Psoas muscle (tissue), 8 donors: ENCODE measurements at regions of chr17 and their contacts with region 1.

Region 1: DNA sequence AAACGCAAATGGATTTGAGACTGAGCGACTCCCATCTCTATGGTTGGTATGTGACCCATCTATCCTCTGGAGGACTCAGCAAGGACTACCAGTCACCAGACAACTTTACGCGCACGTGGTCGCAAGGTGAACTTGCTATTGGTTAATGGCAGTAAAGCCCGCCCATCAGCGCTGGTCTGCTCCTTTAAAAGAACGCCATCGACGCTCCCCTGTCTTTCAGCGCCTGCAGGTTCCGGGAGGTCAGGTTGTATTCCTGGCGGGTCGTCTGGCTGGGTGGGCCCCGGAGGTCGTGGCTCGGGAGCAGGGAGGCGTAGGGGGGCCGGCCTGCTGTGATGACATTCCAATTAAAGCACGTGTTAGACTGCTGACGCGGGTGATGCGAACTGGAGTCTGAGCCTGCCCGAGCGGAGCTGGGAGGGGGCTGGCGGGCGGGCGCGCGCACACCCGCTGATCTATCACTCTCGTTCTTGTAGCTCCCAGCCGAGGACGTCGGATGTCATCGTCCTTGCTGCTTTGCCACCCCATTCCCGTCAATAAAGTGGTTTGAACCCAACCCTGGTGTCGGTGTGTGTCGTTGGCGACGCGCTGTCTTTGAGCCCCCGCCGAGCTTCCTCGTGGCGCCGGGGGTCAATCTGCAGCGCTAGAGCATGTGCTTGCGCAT is 15.9 kb upstream of the ERN1 start:
- DNase-seq: peak; percentile 96 to 98
- ATAC-seq: peak; percentile 86 to 92 (median 88)
- H3K4me3 ChIP-seq: peak overlapping the region; percentile 83
- H3K27ac ChIP-seq: peak overlapping the region; percentile 95
- H3K4me1 ChIP-seq: peaks cover 42% of the 10 kb centered on the region
- H3K27me3 ChIP-seq: no peaks in the 10 kb centered on the region
- CTCF ChIP-seq: no peak

Region 2: GRCh38 chr17:64174686-64175456 is 29.0 kb after region 1 on chr17:
- intact Hi-C with region 1: loop called in 1 of 2 experiments (anchors 1 kb)
- DNase-seq: peak in 1 of 2 donors; percentile 31
- ATAC-seq: peak; percentile 46 to 68 (median 62)
- H3K4me3 ChIP-seq: no peak overlapping the region
- H3K27ac ChIP-seq: peak overlapping the region; percentile 86
- H3K4me1 ChIP-seq: peaks cover 71% of the 10 kb centered on the region
- H3K27me3 ChIP-seq: no peaks in the 10 kb centered on the region
- CTCF ChIP-seq: no peak

Region 3: DNA sequence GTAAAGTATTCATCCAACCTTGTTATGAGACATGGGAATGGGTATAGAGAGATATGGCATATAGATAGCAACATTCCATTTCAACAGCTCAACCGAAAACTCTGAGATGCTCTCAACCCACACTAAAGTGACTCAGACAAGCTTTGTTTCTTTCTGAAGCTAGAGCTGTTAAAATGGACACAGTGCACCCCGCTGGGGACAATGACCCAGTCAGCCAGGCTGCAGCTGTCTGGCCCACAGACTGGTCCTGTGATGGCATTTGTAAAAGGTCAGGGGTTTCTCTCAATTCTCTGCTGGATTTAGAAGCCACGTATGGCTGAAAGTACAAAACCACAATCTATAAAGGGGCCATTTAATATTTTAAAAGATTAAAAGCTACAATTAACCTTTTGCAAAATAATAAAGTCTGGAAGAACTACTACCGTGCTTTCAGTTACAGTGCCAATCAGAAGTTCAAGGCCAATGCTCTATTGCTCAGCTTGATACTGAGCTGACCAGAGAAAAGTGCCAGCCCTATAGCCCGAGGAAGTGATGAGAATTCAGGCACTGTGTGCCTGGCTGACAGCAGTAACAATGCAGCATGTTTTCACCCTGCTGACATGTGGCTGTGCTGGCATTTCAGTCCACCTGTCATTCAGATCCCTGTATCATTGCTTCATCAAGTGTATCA is 56.9 kb after region 1 on chr17:
- intact Hi-C with region 1: loop called in 1 of 2 experiments (anchors 5 kb)
- DNase-seq: no peak
- ATAC-seq: peak; percentile 86 to 88 (median 86)
- H3K4me3 ChIP-seq: no peak overlapping the region
- H3K27ac ChIP-seq: peak overlapping the region; percentile 82
- H3K4me1 ChIP-seq: peaks cover 78% of the 10 kb centered on the region
- H3K27me3 ChIP-seq: no peaks in the 10 kb centered on the region
- CTCF ChIP-seq: no peak

Region 4: DNA sequence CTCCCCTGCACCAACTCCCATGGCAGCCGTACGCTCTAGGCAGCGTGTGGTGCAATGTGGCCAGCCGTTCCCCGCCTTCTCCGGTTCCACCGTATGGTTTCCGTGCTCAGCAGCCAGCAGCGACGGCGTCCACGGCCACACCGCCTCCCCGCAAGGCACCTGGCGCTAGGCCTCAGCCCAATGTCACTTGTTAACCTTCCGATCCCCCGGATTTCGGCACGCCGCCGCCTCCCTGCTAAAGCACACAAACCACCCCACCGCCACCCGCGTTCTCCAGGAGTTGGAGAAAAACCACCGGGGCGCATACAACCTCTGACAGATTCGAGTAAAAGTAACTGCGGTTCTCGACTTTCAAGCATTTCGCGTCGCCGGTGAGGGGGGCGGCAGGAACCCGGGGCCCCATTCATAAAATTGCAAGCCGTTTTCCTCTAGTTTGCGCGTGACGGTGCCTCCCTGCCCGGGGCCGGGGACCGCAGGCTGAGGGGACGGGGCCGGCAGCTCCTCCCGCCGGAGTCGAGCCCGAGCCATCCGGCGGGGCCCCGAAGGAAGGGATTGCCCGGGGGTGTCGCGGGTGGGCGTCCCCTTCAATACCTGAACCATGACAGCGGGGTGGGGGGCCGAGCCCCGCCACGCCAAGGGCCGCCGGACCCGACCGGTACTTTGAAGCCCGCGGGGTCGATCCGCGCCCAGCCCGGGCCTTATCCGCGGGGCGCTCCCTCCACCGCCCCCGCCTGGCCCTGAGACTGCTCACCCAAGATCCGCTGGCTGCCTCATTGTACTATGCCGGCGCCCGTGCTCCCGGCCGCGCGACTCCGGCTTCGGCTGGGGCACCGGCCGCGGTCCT is 116.8 kb after region 1 on chr17 and contains the start of gene TEX2:
- intact Hi-C with region 1: loop called (anchors 1 to 5 kb)
- DNase-seq: peak; percentile 75 to 89
- ATAC-seq: peak; percentile 65 to 88 (median 78)
- H3K4me3 ChIP-seq: peak within 1 kb of the TSS; percentile 97
- H3K27ac ChIP-seq: peak within 1 kb of the TSS; percentile 98
- H3K4me1 ChIP-seq: peaks cover 52% of the 10 kb centered on the region
- H3K27me3 ChIP-seq: no peaks in the 10 kb centered on the region
- CTCF ChIP-seq: no peak
- total RNA-seq, gene TEX2: 45.7 to 72.7 (median 55.7) TPM

Region 5: GRCh38 chr17:64281962-64282727 is 136.3 kb after region 1 on chr17:
- intact Hi-C with region 1: loop called (anchors 2 to 5 kb)
- DNase-seq: peak; percentile 37 to 59
- ATAC-seq: peak; percentile 48 to 71 (median 65)
- H3K4me3 ChIP-seq: peak overlapping the region; percentile 35
- H3K27ac ChIP-seq: peak overlapping the region; percentile 51
- H3K4me1 ChIP-seq: peaks cover 28% of the 10 kb centered on the region
- H3K27me3 ChIP-seq: no peaks in the 10 kb centered on the region
- CTCF ChIP-seq: peak; percentile 87